ENCODE measurements at regions of chr11 and their contacts with region 1.

Region 1: GRCh38 chr11:65711785-65712632 is at the start of gene KAT5:
- DNase-seq: peak; percentile 97 to 99 (median 98)
- H3K4me3 ChIP-seq: peak within 1 kb of the TSS; percentile 74
- H3K4me3 Mint-ChIP-seq: peak within 1 kb of the TSS; percentile 94 to 99 (median 96)
- H3K27ac ChIP-seq: peak within 1 kb of the TSS; percentile 94
- H3K27ac Mint-ChIP-seq: peak within 1 kb of the TSS; percentile 98 to 100 (median 99)
- H3K4me1 ChIP-seq: peaks cover 19% of the 10 kb centered on the region
- H3K4me1 Mint-ChIP-seq: peaks cover 20 to 32% (median 20%) of the 10 kb centered on the region in 3 donors
- H3K27me3 ChIP-seq: no peaks in the 10 kb centered on the region
- H3K27me3 Mint-ChIP-seq: no peaks in the 10 kb centered on the region
- total RNA-seq, gene KAT5: 79.9 to 87.1 TPM

Region 2: GRCh38 chr11:65225279-65226102 is 486.5 kb before region 1 on chr11:
- CTCF ChIA-PET with region 1: no interaction called
- POLR2A ChIA-PET with region 1: no interaction called
- DNase-seq: peak; percentile 42 to 73 (median 46)
- H3K4me3 ChIP-seq: peak overlapping the region; percentile 48
- H3K4me3 Mint-ChIP-seq: peak overlapping the region; percentile 64 to 87 (median 68)
- H3K27ac ChIP-seq: peak overlapping the region; percentile 65
- H3K27ac Mint-ChIP-seq: peak overlapping the region in 1 of 8 donors; percentile 76
- H3K4me1 ChIP-seq: peaks cover 7% of the 10 kb centered on the region
- H3K4me1 Mint-ChIP-seq: peaks cover 7 to 16% (median 12%) of the 10 kb centered on the region in 3 donors
- H3K27me3 ChIP-seq: no peaks in the 10 kb centered on the region
- H3K27me3 Mint-ChIP-seq: peaks cover 22 to 27% of the 10 kb centered on the region in 2 donors

Region 3: GRCh38 chr11:65770856-65771540 is 59.0 kb after region 1 on chr11:
- CTCF ChIA-PET with region 1: interaction called, 20 read pairs
- POLR2A ChIA-PET with region 1: no interaction called
- DNase-seq: no peak
- H3K4me3 ChIP-seq: no peak overlapping the region
- H3K4me3 Mint-ChIP-seq: no peak overlapping the region
- H3K27ac ChIP-seq: no peak overlapping the region
- H3K27ac Mint-ChIP-seq: no peak overlapping the region
- H3K4me1 ChIP-seq: no peaks in the 10 kb centered on the region
- H3K4me1 Mint-ChIP-seq: peaks cover 5 to 7% (median 5%) of the 10 kb centered on the region in 3 donors
- H3K27me3 ChIP-seq: no peaks in the 10 kb centered on the region
- H3K27me3 Mint-ChIP-seq: no peaks in the 10 kb centered on the region

Region 4: DNA sequence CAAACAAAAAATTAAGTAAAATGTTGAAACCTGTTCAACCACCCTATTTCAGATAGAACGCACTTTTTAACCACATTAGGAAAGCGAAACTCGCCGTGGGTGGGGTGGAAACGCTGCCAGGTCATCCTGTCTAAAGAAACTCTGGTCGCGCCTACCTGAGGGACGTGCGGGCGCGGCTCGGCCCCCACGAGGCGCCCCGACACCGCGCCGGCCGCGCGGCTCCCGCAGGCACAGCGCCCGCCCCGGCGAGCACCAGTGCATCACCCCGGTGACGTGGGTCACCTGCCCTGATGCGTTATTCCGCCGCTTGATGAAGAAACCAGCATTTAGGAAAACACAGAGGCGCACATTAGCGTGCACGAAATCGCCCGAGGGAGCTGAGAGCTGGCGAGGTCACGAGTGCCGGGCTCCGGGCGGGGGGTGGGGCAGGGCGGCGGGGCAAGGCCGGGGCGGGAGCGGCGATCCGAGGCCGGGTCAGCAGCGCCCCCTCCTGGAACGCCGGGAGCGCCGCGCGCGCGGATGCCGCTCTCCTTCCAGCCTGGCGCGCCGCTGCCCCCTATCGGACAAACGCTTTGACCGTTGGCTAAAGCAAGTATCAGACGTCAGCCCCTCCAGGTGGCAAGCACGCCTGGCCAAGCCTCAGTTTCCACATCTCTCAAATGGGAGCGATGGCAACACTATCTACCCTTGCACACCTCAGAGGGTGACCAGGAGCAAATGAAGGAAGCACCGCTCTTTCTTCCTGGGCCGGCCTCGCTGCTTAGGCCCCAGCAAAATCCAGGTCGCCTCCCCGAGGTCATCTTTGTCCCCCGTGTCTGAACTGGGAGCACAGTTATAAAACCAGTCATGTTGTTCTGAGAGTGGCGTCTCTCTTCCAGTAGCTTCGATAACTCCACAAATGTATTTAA is 106.1 kb after region 1 on chr11:
- CTCF ChIA-PET with region 1: interaction called, 50 read pairs
- POLR2A ChIA-PET with region 1: interaction called, 5 read pairs
- DNase-seq: peak; percentile 87 to 97 (median 93)
- H3K4me3 ChIP-seq: peak overlapping the region; percentile 62
- H3K4me3 Mint-ChIP-seq: peak overlapping the region; percentile 74 to 85 (median 81)
- H3K27ac ChIP-seq: peak overlapping the region; percentile 53
- H3K27ac Mint-ChIP-seq: peak overlapping the region in 7 of 8 donors; percentile 70 to 90 (median 77)
- H3K4me1 ChIP-seq: peaks cover 10% of the 10 kb centered on the region
- H3K4me1 Mint-ChIP-seq: peaks cover 8 to 11% (median 10%) of the 10 kb centered on the region in 3 donors
- H3K27me3 ChIP-seq: no peaks in the 10 kb centered on the region
- H3K27me3 Mint-ChIP-seq: no peaks in the 10 kb centered on the region

Region 5: GRCh38 chr11:65859200-65859811 is 147.3 kb after region 1 on chr11:
- CTCF ChIA-PET with region 1: interaction called, 16 read pairs
- POLR2A ChIA-PET with region 1: no interaction called
- DNase-seq: peak; percentile 94 to 99 (median 97)
- H3K4me3 ChIP-seq: peak overlapping the region; percentile 94
- H3K4me3 Mint-ChIP-seq: peak overlapping the region; percentile 90 to 96 (median 93)
- H3K27ac ChIP-seq: peak overlapping the region; percentile 93
- H3K27ac Mint-ChIP-seq: peak overlapping the region; percentile 88 to 98 (median 98)
- H3K4me1 ChIP-seq: peaks cover 52% of the 10 kb centered on the region
- H3K4me1 Mint-ChIP-seq: peaks cover 46 to 62% (median 55%) of the 10 kb centered on the region in 3 donors
- H3K27me3 ChIP-seq: no peaks in the 10 kb centered on the region
- H3K27me3 Mint-ChIP-seq: no peaks in the 10 kb centered on the region

Measured in CD8-positive, alpha-beta memory T cell (primary cell).